ENCODE measurements at regions of chr11 and their contacts with region 1.

Region 1: DNA sequence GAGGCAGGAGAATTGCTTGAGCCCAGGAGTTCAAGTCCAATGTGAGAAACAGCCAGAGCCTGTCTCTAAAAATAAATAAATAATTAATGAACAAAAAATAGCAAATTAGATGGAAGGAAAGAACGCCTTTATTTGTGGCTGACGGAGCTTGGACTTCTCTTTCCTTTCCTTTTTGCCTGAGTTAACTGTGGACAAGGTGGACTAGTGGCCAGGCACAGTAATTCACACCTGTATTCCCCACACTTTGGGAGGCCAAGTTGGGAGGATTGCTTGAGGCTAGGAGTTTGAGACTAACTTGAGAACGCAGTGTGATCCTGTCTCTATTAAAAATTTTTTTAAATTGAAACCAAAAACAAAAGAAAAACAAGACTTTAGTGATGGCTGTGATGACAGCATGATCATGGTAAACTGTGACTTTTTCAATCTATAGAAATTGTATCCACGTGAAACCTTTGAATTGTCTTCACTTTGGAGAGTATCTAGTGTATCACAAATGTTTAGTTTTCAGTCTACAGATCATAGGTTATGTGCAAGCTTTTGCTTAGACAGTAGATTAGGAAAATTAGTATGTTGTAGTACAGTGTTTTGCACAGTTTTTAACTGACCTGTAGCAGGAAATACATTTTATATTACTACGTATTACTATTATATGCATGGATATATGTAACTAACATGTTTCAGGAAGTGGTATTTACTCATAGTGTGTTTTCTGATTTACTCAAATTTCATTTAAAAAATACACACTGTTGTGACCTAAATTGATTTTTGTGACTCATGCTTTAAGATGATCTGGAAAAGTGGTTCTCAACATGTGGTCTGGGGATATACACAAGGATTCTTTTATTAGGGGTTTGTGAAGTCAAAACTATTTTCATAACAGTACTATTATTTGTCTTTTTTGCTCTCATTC is 42.1 kb downstream of the KDM2A start:
- DNase-seq: no peak
- ATAC-seq: peak; percentile 66
- H3K4me3 ChIP-seq: no peak overlapping the region
- H3K27ac ChIP-seq: no peak overlapping the region
- H3K4me1 ChIP-seq: peaks cover 20 to 27% of the 10 kb centered on the region in 2 experiments; a peak in 3 of 4 replicates
- H3K27me3 ChIP-seq: no peaks in the 10 kb centered on the region
- CTCF ChIP-seq: peak in 2 of 3 experiments; percentile 25 to 35; a peak in 4 of 6 replicates
- POLR2A ChIP-seq: no peak
- RAD21 ChIP-seq: no peak

Region 2: GRCh38 chr11:67126986-67127385 is 34.1 kb before region 1 on chr11:
- CTCF ChIA-PET with region 1: no interaction called
- POLR2A ChIA-PET with region 1: no interaction called
- RAD21 ChIA-PET with region 1: no interaction called
- intact Hi-C with region 1: loop called (anchors 5 kb)
- DNase-seq: no peak
- ATAC-seq: no peak
- H3K4me3 ChIP-seq: no peak overlapping the region
- H3K27ac ChIP-seq: no peak overlapping the region
- H3K4me1 ChIP-seq: no peaks in the 10 kb centered on the region; a peak in 2 of 4 replicates
- H3K27me3 ChIP-seq: no peaks in the 10 kb centered on the region
- CTCF ChIP-seq: no peak
- POLR2A ChIP-seq: no peak
- RAD21 ChIP-seq: no peak

Region 3: DNA sequence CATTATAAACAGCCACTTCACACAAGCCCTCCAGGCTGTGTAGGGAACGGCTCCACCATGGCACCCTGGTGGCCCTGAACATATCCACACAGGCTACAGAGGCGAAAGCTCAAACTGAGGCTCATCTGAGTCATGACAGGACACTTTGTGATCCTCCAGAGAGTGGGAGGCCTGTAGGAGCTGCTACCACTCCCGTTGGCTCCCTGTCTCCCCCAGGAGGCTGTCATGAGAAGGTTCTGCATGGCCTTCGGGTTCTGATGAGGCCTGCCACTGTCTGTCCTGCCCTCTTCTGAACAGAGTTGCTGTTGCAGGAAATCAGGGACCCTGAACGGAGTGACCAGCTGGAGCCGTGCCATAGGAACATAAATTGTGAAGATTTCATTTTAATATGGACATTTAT is 537.1 kb after region 1 on chr11:
- CTCF ChIA-PET with region 1: no interaction called
- POLR2A ChIA-PET with region 1: no interaction called
- RAD21 ChIA-PET with region 1: no interaction called
- intact Hi-C with region 1: no loop called
- DNase-seq: peak; percentile 22
- ATAC-seq: peak; percentile 99
- H3K4me3 ChIP-seq: no peak overlapping the region
- H3K27ac ChIP-seq: no peak overlapping the region
- H3K4me1 ChIP-seq: peaks cover 0 to 8% of the 10 kb centered on the region in 2 experiments; a peak in 3 of 4 replicates
- H3K27me3 ChIP-seq: no peaks in the 10 kb centered on the region
- CTCF ChIP-seq: peak; percentile 40 to 47 (median 46); a peak in 4 of 6 replicates
- POLR2A ChIP-seq: no peak
- RAD21 ChIP-seq: peak; percentile 31; the same call in 1 of the 2 replicates

Measured in HCT116 (cell line).